Heart right ventricle (tissue), 16 donors: ENCODE measurements at regions of chr2 and their contacts with region 1.

Region 1: DNA sequence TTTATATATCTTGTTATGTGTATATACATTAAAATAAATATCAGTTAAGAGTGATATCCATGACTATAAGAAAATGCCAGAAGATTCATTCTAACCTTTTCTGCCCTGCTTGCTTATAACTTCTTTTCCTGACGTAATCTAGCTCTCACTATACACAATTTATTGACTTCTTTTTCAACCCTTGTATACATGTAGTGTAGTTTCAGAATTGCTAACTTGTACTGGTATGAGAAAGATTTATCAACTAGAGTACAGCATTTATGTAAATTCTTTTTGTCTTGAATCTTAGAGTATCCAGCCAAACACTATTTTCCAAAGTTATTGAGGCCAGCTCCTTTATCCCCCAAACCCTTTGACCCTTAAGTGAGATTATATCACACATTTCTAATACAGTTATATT is 798.0 kb upstream of the RAB6C start:
- DNase-seq: no peak
- ATAC-seq: no peak
- H3K4me3 ChIP-seq: no peak overlapping the region
- H3K27ac ChIP-seq: no peak overlapping the region
- H3K4me1 ChIP-seq: no peaks in the 10 kb centered on the region
- H3K27me3 ChIP-seq: peaks cover 0 to 11% (median 2%) of the 10 kb centered on the region in 7 donors
- CTCF ChIP-seq: no peak

Region 2: GRCh38 chr2:128413718-128414341 is 767.6 kb before region 1 on chr2:
- intact Hi-C with region 1: loop called in 1 of 10 experiments (anchors 5 kb)
- DNase-seq: no peak
- ATAC-seq: no peak
- H3K4me3 ChIP-seq: no peak overlapping the region
- H3K27ac ChIP-seq: no peak overlapping the region
- H3K4me1 ChIP-seq: no peaks in the 10 kb centered on the region
- H3K27me3 ChIP-seq: no peaks in the 10 kb centered on the region
- CTCF ChIP-seq: no peak

Region 3: GRCh38 chr2:129069875-129070594 is 111.4 kb before region 1 on chr2:
- intact Hi-C with region 1: no loop called
- DNase-seq: peak in 1 of 2 donors; percentile 26
- ATAC-seq: peak in 5 of 8 donors; percentile 24 to 85 (median 74)
- H3K4me3 ChIP-seq: no peak overlapping the region
- H3K27ac ChIP-seq: no peak overlapping the region
- H3K4me1 ChIP-seq: peaks cover 0 to 8% (median 0%) of the 10 kb centered on the region in 9 donors
- H3K27me3 ChIP-seq: peaks cover 0 to 15% (median 0%) of the 10 kb centered on the region in 7 donors
- CTCF ChIP-seq: no peak

Region 4: DNA sequence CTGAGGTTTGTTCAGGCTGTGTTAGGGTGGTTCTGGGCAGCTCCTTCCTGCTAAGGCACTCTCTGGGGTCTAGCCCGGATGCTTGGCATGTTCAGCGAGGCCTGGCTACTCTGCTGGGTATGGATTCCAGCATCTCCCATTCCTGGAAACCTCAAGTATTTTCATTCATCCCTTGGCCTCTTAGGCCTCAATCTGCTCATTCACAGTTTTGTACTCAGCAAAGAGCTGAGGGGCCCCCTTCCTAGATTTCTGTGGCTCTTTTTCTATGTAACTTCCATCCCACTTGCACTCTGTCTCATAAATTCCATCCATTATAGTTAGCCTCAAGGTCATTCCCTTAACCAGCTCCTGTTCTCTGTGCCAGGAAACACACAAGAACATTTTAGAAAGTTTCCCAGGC is 64.0 kb before region 1 on chr2:
- intact Hi-C with region 1: no loop called
- DNase-seq: no peak
- ATAC-seq: no peak
- H3K4me3 ChIP-seq: no peak overlapping the region
- H3K27ac ChIP-seq: no peak overlapping the region
- H3K4me1 ChIP-seq: no peaks in the 10 kb centered on the region
- H3K27me3 ChIP-seq: no peaks in the 10 kb centered on the region
- CTCF ChIP-seq: no peak

Region 5: DNA sequence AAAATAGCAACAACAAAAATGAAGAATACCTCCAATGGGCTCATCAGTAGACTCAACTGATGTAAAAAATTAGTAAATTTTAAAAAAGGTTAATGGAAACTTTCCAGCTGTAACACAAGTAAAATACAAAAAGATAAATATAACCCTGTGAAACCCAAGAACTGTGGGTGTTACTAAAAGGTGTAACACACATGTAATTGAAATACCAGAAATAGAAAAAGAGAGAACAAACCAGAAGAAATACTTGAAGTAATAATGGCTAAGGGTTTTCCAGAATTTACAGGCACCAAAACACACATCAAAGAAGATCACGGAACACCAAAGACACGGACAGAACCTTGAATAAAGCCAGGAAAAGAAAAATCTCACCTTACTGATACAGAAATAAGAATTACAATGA is 207.4 kb after region 1 on chr2:
- intact Hi-C with region 1: no loop called
- DNase-seq: no peak
- ATAC-seq: no peak
- H3K4me3 ChIP-seq: no peak overlapping the region
- H3K27ac ChIP-seq: no peak overlapping the region
- H3K4me1 ChIP-seq: no peaks in the 10 kb centered on the region
- H3K27me3 ChIP-seq: peaks cover 0 to 23% (median 0%) of the 10 kb centered on the region in 7 donors
- CTCF ChIP-seq: no peak